H1 (cell line): ENCODE measurements at regions of chr10 and their contacts with region 1.

Region 1: GRCh38 chr10:125533866-125534265 is 149.1 kb downstream of the TEX36 start:
- DNase-seq: no peak
- H3K4me3 ChIP-seq: no peak overlapping the region
- H3K27ac ChIP-seq: no peak overlapping the region
- H3K4me1 ChIP-seq: no peaks in the 10 kb centered on the region
- H3K27me3 ChIP-seq: no peaks in the 10 kb centered on the region
- CTCF ChIP-seq: no peak
- EP300 ChIP-seq: no peak
- POLR2A ChIP-seq: no peak
- RAD21 ChIP-seq: no peak

Region 2: GRCh38 chr10:125505650-125506049 is 28.2 kb before region 1 on chr10:
- CTCF ChIA-PET with region 1: no interaction called
- POLR2A ChIA-PET with region 1: no interaction called
- DNase-seq: no peak
- H3K4me3 ChIP-seq: no peak overlapping the region
- H3K27ac ChIP-seq: no peak overlapping the region
- H3K4me1 ChIP-seq: no peaks in the 10 kb centered on the region
- H3K27me3 ChIP-seq: no peaks in the 10 kb centered on the region
- CTCF ChIP-seq: no peak
- EP300 ChIP-seq: no peak
- POLR2A ChIP-seq: no peak
- RAD21 ChIP-seq: no peak

Region 3: DNA sequence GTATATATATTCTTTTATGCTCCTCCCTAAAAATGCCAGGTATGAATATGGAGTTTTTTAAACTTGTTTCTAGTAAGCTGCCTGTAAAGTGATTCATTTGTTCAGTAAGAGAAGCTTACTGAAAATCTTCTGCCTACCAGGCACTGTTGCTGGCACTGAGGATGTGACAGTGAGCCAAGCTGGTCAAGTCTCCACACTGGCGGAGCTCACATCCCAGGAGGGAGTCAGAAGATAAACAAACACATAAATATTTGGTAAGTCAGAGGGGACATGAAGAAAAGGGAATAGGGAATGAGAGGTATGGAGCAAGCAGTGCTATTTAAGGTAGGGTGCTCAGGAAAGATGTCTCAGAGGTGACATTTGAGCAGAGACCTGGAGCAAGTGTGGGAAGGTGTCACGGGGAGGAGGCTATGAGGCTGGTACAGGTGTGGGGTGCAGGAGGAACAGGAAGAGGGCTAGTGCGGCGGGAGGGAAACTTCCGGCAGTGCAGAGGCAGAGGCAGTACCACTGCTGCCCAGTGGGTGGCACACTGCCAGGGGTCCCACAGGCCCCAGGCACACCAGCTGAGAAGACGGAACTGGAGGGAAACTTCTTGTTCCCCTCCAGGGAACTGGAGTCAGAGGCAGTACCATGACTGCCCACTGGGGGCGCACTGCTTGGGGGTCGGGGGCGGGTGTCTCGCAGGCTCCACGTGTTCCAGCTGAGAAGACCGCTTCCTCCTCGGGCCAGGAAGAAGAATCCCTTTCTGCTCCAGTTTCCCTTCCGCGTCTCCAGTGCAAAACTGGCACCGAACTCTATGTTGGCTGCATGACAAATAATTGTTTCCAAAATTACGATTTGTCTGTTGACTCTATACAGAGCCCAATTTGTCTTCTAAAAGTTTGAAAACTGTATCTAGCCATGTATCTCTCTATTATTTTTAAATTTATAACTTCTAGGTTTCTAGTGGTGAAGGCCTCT is 11.9 kb before region 1 on chr10:
- CTCF ChIA-PET with region 1: interaction called, 16 read pairs
- POLR2A ChIA-PET with region 1: no interaction called
- DNase-seq: peak; percentile 77 to 96
- H3K4me3 ChIP-seq: no peak overlapping the region
- H3K27ac ChIP-seq: no peak overlapping the region
- H3K4me1 ChIP-seq: no peaks in the 10 kb centered on the region
- H3K27me3 ChIP-seq: no peaks in the 10 kb centered on the region
- CTCF ChIP-seq: peak; percentile 69 to 96 (median 95)
- EP300 ChIP-seq: no peak
- POLR2A ChIP-seq: no peak
- RAD21 ChIP-seq: peak; percentile 59 to 72